Activated B cell treated with CpG ODN at 0.5 μM for 24 hours (primary cell): ENCODE measurements at regions of chr2 and their contacts with region 1.

Region 1: GRCh38 chr2:208294482-208295024 is 28.5 kb downstream of the PIKFYVE start:
- DNase-seq: no peak
- ATAC-seq: peak; percentile 85
- H3K4me3 Mint-ChIP-seq: peak overlapping the region; percentile 52
- H3K27ac Mint-ChIP-seq: peak overlapping the region; percentile 90
- H3K4me1 Mint-ChIP-seq: peaks cover 65% of the 10 kb centered on the region
- H3K27me3 Mint-ChIP-seq: no peaks in the 10 kb centered on the region
- CTCF ChIP-seq: no peak

Region 2: DNA sequence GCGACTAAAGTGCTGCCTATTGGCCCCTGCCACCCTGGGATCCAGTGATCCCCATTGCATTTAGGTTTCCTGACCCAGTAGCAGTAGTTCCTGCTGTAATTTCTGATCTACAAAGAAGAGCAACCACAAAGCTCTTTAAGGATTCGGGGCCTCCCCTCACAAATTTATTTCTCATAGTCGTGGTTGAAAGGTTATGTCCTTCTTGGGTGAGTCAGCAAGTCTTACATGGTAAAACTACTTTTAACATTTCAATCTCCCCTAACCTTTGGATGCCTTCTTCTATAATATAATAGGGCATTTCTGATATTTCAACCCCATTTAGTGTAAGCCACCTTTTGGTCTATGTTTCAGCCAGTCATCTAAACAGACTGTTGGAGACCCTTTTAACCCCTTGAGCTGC is 13.6 kb before region 1 on chr2:
- CTCF ChIA-PET with region 1: no interaction called
- POLR2A ChIA-PET with region 1: no interaction called
- intact Hi-C with region 1: loop called (anchors 2 kb)
- DNase-seq: no peak
- ATAC-seq: peak; percentile 62
- H3K4me3 Mint-ChIP-seq: no peak overlapping the region
- H3K27ac Mint-ChIP-seq: peak overlapping the region; percentile 60
- H3K4me1 Mint-ChIP-seq: peaks cover 32% of the 10 kb centered on the region
- H3K27me3 Mint-ChIP-seq: no peaks in the 10 kb centered on the region
- CTCF ChIP-seq: no peak

Region 3: DNA sequence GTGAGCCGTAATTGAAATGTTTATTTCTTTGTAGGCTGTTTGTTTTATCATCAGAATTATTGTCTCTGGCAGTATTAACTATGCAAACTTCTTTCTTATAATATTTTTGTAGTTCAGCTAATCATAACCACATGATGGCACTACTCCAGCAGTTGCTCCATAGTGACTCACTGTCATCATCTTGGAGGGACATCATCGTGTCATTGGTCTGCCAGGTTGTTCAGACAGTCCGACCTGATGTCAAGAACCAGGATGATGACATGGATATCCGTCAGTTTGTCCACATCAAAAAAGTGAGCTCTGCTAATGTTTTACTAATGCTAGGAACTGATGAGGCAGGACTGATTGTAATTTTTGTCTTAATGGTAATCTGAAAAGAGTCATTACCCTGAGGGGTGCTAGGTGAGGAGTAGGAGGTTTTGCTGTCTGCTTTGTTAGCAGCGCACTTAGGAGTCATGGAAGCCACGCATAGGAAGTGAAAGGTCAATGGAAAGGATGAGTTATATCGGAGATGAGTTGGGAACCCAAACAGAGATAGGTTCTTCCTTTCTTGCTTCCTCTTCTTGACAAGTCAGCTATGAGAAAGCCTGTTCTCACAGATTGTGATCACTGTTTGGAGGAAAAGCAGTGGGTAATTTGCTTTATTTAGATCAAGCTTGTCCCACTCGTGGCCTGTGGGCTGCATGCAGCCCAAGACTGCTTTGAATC is 20.7 kb after region 1 on chr2:
- CTCF ChIA-PET with region 1: no interaction called
- POLR2A ChIA-PET with region 1: interaction called, 14 read pairs
- intact Hi-C with region 1: loop called (anchors 1 kb)
- DNase-seq: no peak
- ATAC-seq: peak; percentile 54
- H3K4me3 Mint-ChIP-seq: peak overlapping the region; percentile 89
- H3K27ac Mint-ChIP-seq: peak overlapping the region; percentile 93
- H3K4me1 Mint-ChIP-seq: peaks cover 77% of the 10 kb centered on the region
- H3K27me3 Mint-ChIP-seq: no peaks in the 10 kb centered on the region
- CTCF ChIP-seq: no peak

Region 4: GRCh38 chr2:208356846-208357574 is 62.5 kb after region 1 on chr2:
- CTCF ChIA-PET with region 1: no interaction called
- POLR2A ChIA-PET with region 1: no interaction called
- intact Hi-C with region 1: no loop called
- DNase-seq: no peak
- ATAC-seq: no peak
- H3K4me3 Mint-ChIP-seq: no peak overlapping the region
- H3K27ac Mint-ChIP-seq: peak overlapping the region; percentile 27
- H3K4me1 Mint-ChIP-seq: peaks cover 6% of the 10 kb centered on the region
- H3K27me3 Mint-ChIP-seq: no peaks in the 10 kb centered on the region
- CTCF ChIP-seq: no peak